OCI-LY7 (cell line): ENCODE measurements at regions of chr11 and their contacts with region 1.

Region 1: DNA sequence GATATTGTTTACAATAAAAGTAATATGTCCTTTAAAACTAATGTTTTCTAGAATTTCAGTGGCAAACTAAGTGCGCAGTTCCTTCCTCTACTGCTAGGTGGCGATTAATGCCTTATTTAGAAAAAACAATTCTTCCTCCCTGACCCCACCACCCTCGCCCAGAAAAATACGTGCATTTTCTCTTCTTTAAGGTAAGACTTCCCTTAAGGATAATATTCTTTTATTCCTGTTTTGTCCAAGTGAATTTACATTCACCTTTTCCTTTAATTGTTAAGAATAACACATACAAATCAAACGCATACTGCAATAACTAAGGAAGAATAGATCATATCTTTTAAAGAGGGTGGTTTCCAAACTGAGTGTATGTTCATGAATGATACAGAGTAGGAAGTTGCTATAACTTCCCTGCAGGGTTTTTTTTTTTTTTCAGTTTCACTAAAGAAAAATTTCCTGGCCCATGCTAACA is 17.0 kb upstream of the PSMA1 start:
- DNase-seq: peak; percentile 40
- H3K4me3 ChIP-seq: no peak overlapping the region
- H3K27ac ChIP-seq: no peak overlapping the region
- H3K4me1 ChIP-seq: no peaks in the 10 kb centered on the region
- CTCF ChIP-seq: peak; percentile 92

Region 2: DNA sequence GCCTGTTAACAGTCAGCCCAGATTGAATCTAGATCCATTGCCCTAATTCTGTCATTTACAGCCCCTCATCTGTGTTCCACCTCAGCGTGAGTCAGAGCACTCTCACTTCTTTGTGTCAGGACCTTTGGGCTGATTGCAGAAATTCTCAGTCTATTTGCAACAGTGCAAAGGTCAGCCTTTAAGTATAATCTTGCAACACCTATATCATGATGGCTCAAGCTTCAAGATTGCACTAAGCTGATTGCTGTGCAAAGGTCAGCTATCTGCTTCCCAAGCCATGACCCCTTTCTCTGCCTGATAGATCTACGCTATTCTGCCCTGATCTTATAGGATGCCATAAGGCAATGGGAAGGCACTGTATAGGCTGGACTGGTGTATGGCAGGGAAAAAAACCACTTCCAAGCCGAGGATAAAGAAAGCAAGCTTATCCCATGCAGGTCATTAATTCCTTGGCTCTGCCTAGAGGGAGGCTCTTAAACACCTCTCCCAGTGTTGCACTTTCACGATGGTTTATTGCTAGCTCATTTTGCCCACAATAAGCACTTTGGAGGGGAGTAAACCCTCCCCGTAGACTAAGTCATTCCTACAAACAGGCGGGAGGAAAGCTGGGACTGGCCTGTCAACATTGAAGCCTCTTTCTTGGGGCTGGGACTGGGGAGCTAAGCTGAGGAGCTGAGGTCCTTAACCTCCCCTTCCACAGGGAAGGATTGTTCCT is 278.8 kb before region 1 on chr11:
- CTCF ChIA-PET with region 1: no interaction called
- POLR2A ChIA-PET with region 1: no interaction called
- intact Hi-C with region 1: no loop called
- DNase-seq: no peak
- H3K4me3 ChIP-seq: no peak overlapping the region
- H3K27ac ChIP-seq: no peak overlapping the region
- H3K4me1 ChIP-seq: no peaks in the 10 kb centered on the region
- CTCF ChIP-seq: no peak

Region 3: GRCh38 chr11:14636119-14636518 is 99.0 kb after region 1 on chr11:
- CTCF ChIA-PET with region 1: no interaction called
- POLR2A ChIA-PET with region 1: no interaction called
- intact Hi-C with region 1: loop called (anchors 5 kb)
- DNase-seq: no peak
- H3K4me3 ChIP-seq: no peak overlapping the region
- H3K27ac ChIP-seq: no peak overlapping the region
- H3K4me1 ChIP-seq: no peaks in the 10 kb centered on the region
- CTCF ChIP-seq: no peak

Region 4: GRCh38 chr11:14764579-14765527 is 227.7 kb after region 1 on chr11:
- CTCF ChIA-PET with region 1: no interaction called
- POLR2A ChIA-PET with region 1: interaction called, 3 read pairs
- intact Hi-C with region 1: loop called (anchors 10 kb)
- DNase-seq: no peak
- H3K4me3 ChIP-seq: no peak overlapping the region
- H3K27ac ChIP-seq: no peak overlapping the region
- H3K4me1 ChIP-seq: no peaks in the 10 kb centered on the region
- CTCF ChIP-seq: no peak